ENCODE measurements at regions of chr12 and their contacts with region 1.

Region 1: DNA sequence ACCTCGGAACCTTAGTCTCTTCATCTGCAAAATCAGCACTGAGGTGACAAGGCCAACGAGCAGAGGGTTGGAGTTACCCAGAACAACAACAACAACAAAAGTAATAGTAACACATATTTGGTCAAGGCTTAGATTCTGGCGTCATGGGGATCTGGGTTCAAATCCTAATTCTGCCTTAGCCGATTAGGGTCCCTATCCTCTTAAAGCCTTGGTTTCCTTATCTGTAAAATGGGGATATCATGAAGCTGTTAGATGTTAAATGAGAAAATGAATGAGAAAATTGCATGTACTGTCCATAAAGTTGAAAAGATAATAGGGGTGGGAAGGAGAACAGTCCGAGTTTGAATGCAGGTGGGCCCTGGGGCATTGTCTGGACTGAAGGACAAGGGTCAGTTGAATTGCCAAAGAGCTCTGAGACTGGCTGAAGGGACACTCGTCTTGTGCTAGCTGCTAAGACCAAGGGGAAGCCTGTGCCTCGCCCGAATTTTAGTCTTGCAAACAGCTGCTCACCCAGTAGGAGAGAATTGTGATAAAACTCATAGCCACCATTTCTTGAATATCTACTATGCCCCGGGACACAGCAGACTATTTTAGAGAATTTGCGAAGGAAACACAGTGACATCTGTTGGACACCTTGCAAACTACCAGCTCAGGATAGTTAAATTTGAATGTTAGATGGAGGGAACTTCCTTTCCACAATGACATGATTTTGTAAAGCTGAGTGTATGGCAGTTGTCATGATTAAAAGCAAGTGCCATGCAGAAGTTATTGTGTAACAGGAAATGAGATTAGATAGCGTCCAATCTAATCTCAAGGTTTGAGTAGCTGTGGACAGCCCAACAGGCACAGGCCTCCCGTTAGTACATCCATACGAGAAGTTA is 6.8 kb upstream of the HNF1A start:
- DNase-seq: peak; percentile 42
- H3K4me3 ChIP-seq: no peak overlapping the region
- H3K27ac ChIP-seq: no peak overlapping the region
- H3K4me1 ChIP-seq: no peaks in the 10 kb centered on the region
- H3K27me3 ChIP-seq: no peaks in the 10 kb centered on the region
- CTCF ChIP-seq: peak; percentile 27 to 77 (median 63)
- POLR2A ChIP-seq: no peak

Region 2: GRCh38 chr12:120640840-120641833 is 330.4 kb before region 1 on chr12:
- intact Hi-C with region 1: loop called (anchors 10 kb)
- DNase-seq: peak; percentile 65
- H3K4me3 ChIP-seq: peak overlapping the region; percentile 44 to 54
- H3K27ac ChIP-seq: no peak overlapping the region
- H3K4me1 ChIP-seq: peaks cover 6% of the 10 kb centered on the region
- H3K27me3 ChIP-seq: no peaks in the 10 kb centered on the region
- CTCF ChIP-seq: no peak
- POLR2A ChIP-seq: no peak

Region 3: DNA sequence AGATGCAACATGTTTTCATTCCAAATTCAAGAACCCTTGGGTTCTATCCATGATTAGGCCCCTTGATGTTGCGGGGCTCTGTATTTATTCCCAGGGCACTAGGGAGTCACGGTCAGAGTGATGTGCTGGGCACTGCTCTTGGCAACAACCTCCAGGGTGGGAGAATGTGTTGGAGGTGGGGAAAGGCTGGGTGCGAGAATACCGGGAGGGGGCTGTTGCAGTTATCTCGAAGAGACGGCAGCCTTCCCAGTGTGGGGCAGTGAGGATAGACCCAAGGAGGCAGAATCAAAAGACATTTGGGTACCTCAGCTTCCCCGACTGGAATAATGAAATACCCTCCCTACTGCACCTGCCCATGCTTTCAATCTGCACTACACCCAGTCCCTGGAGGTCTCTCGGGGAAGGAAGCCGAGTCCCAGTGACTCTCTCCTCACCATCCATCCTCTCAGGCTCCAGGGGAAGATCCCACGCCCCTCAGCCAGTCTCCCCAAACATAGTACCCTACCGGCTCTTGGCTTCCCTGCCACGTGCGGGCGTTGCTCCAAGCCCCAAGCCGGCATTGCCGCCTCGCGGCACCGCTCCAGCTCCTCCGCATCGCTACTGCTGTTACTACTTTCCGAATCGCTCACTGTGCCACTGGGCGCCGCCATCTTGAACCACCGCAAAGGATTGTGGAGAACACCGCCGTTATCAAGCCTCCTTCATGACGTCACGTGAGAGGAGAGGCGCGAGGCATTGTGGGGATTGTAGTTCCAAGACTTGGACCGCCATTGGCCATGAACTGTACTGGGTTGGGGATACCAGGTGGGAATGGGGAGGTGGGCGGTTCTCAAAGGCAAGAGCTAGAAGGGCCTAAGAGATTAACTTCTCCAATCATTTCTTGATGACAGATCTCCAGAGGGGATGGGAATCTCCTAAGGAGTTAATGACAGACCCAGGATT is 44.6 kb after region 1 on chr12 and contains the start of gene C12orf43:
- intact Hi-C with region 1: no loop called
- DNase-seq: peak; percentile 98
- H3K4me3 ChIP-seq: peak within 1 kb of the TSS; percentile 76 to 81
- H3K27ac ChIP-seq: peak within 1 kb of the TSS; percentile 32 to 81
- H3K4me1 ChIP-seq: no peaks in the 10 kb centered on the region
- H3K27me3 ChIP-seq: no peaks in the 10 kb centered on the region
- CTCF ChIP-seq: peak in 1 of 3 experiments; percentile 1
- POLR2A ChIP-seq: no peak
- total RNA-seq, gene C12orf43: 14.3 to 16.5 TPM

Region 4: DNA sequence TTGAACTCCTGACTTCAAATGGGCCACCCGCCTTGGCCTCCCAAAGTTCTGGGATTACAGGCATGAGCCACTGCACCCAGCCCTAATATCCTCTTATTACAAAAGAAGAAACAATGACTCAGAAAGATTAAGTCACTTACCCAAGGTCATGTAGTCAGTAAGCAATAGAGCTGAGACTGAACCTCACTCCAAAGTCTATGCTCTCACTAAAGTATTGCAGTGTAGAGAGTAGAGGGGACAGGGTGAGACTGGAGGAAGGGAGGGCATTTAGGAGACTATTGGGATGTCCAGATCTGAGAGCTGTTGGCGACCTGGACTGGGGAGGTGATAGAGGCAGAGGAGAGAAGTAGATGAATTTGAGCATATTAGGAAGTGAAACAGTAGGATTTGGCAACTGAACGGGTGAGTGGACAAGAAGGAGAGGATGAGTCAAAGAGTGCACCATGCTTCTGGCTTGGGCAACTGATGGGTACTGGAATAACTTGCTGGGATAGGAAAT is 172.9 kb after region 1 on chr12:
- intact Hi-C with region 1: no loop called
- DNase-seq: no peak
- H3K4me3 ChIP-seq: no peak overlapping the region
- H3K27ac ChIP-seq: no peak overlapping the region
- H3K4me1 ChIP-seq: no peaks in the 10 kb centered on the region
- H3K27me3 ChIP-seq: no peaks in the 10 kb centered on the region
- CTCF ChIP-seq: no peak
- POLR2A ChIP-seq: no peak

Measured in testis (tissue), 5 donors.